ENCODE measurements at regions of chr5 and their contacts with region 1.

Region 1: DNA sequence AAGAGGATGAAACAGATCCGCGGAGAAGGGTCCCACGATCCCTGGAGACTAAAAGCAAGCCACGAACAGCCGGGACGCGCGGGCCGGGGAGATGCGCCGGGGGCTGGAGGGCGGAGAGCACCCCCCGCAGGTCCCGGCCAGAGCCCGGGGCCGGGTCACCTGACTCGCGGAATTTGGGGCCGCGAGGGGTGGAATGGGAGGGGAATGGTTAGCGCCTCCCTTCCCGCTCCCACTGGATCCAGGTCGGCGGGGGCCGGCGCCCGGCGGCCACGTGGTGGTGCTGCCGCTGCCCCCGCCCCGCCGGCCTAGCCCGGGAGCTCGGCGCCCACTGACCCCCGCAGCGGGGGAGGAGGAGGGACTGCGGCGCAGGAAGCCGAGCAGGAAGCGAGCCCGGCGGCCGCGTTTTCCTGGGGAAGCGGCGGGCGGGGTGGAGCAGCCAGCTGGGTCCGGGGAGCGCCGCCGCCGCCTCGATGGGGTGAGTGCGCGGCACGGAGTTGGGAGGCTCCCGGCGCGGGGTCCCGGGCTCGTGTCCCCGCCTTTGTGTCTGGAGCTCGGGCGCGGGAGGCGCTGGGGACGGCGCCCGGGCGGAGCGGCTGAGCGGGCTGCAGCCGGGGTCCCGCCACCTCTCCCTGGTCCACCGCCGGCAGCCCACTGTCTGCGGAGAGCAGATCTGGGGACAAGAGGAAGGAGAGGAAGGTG is at the start of gene RAI14:
- DNase-seq: peak; percentile 82 to 87 (median 83)
- ATAC-seq: peak; percentile 56 to 92 (median 88)
- H3K4me3 ChIP-seq: peak within 1 kb of the TSS; percentile 69 to 95 (median 83)
- H3K27ac ChIP-seq: peak within 1 kb of the TSS; percentile 54 to 95 (median 86)
- H3K4me1 ChIP-seq: peaks cover 0 to 29% (median 11%) of the 10 kb centered on the region in 12 donors
- H3K27me3 ChIP-seq: peaks cover 0 to 28% (median 0%) of the 10 kb centered on the region in 9 donors
- CTCF ChIP-seq: peak in 6 of 12 donors; percentile 9 to 40 (median 20)
- POLR2A ChIP-seq: peak in 1 of 2 donors; percentile 56
- total RNA-seq, gene RAI14: 3.5 to 34.3 (median 10.7) TPM

Region 2: DNA sequence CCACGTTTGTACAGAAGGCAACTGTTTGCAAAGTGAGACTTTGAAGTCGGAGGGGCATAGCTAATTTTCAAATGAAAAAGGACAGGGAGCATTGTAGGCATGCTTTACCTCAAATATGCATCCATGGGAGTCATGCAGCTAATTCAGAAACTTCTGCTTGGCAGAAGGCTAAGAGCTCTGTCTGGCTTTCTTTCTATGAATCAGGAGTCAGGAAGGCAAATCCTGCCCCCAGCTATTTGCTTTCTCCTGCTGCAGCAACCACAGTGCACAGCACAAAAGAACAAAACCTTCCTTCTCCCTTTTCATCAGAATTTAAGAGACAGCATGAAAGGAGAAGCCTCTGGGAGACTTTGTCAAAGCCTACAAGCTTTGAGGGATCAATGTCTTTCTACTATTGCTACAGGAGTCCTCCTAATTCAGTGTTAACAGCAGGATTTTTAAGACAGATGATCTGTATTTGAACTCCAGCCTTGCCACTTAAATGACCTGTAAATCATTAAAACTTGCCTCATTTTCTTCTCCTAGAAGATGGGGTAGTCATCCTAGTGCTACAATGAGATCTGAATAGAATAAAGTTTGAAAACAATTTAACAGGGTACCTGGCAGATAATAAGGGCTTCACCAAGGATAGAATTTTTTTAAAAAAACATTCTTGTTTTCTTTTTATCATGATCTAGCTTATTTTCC is 1006.2 kb before region 1 on chr5:
- intact Hi-C with region 1: no loop called
- DNase-seq: no peak
- ATAC-seq: no peak
- H3K4me3 ChIP-seq: no peak overlapping the region
- H3K27ac ChIP-seq: no peak overlapping the region
- H3K4me1 ChIP-seq: no peaks in the 10 kb centered on the region
- H3K27me3 ChIP-seq: no peaks in the 10 kb centered on the region
- CTCF ChIP-seq: no peak
- POLR2A ChIP-seq: no peak

Region 3: DNA sequence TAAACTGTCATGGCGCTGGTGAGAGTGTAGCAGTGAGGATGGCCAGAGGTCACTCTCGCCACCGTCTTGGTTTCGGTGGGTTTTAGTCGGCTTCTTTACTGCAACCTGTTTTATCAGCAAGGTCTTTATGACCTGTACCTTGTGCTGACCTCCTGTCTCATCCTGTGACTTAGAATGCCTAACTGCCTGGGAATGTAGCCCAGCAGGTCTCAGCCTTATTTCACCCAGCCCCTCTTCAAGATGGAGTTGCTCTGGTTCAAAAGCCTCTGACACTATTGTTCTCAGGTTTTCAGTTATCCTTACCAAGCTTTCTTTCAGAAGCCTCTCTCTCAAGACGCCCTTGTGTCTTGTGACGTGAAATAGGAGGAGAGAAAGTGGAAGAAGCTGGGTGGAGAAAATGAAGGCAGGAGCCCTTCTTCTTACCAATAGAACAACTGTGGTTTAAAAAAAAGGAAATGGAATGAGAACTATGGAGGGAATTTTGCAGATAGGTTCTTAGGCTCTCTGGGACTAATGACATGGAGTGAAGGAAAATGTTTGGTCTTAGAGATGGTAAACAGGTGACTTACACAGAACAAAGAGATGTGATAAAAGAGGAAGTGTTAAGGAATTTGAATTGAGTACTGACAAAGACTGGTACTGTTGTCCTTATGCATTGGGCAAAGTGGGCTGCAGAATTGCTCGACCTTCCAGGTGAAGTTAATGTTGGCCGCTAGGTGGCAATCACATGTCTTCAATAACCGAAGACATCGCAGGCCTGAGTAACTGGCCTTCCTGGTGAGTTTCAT is 133.4 kb before region 1 on chr5:
- intact Hi-C with region 1: loop called in 5 of 10 experiments (anchors 5 to 10 kb)
- DNase-seq: peak in 4 of 5 donors; percentile 61 to 69 (median 66)
- ATAC-seq: peak; percentile 64 to 83 (median 71)
- H3K4me3 ChIP-seq: no peak overlapping the region
- H3K27ac ChIP-seq: no peak overlapping the region
- H3K4me1 ChIP-seq: peaks cover 0 to 14% (median 2%) of the 10 kb centered on the region in 12 donors
- H3K27me3 ChIP-seq: no peaks in the 10 kb centered on the region
- CTCF ChIP-seq: peak; percentile 67 to 88 (median 74)
- POLR2A ChIP-seq: no peak

Region 4: GRCh38 chr5:34551911-34552433 is 104.2 kb before region 1 on chr5:
- intact Hi-C with region 1: loop called in 1 of 10 experiments (anchors 5 kb)
- DNase-seq: peak in 2 of 5 donors; percentile 23 to 46
- ATAC-seq: peak; percentile 73 to 85 (median 81)
- H3K4me3 ChIP-seq: no peak overlapping the region
- H3K27ac ChIP-seq: peak overlapping the region in 5 of 12 donors; percentile 2 to 66 (median 14)
- H3K4me1 ChIP-seq: peaks cover 0 to 40% (median 9%) of the 10 kb centered on the region in 12 donors
- H3K27me3 ChIP-seq: no peaks in the 10 kb centered on the region
- CTCF ChIP-seq: no peak
- POLR2A ChIP-seq: no peak

Region 5: GRCh38 chr5:34717426-34718327 is 61.5 kb after region 1 on chr5:
- intact Hi-C with region 1: loop called in 1 of 10 experiments (anchors 5 kb)
- DNase-seq: no peak
- ATAC-seq: peak in 3 of 4 donors; percentile 45 to 65 (median 54)
- H3K4me3 ChIP-seq: no peak overlapping the region
- H3K27ac ChIP-seq: peak overlapping the region in 5 of 12 donors; percentile 10 to 47 (median 36)
- H3K4me1 ChIP-seq: peaks cover 0 to 20% (median 7%) of the 10 kb centered on the region in 12 donors
- H3K27me3 ChIP-seq: no peaks in the 10 kb centered on the region
- CTCF ChIP-seq: no peak
- POLR2A ChIP-seq: no peak

Region 6: GRCh38 chr5:34838785-34839714 is 182.9 kb after region 1 on chr5 and contains the start of gene TTC23L:
- intact Hi-C with region 1: loop called in 1 of 10 experiments (anchors 10 kb)
- DNase-seq: peak; percentile 87 to 92 (median 90)
- ATAC-seq: peak; percentile 89 to 97 (median 94)
- H3K4me3 ChIP-seq: peak within 1 kb of the TSS; percentile 53 to 89 (median 70)
- H3K27ac ChIP-seq: peak within 1 kb of the TSS in 7 of 12 donors; percentile 5 to 65 (median 41)
- H3K4me1 ChIP-seq: peaks cover 0 to 15% (median 5%) of the 10 kb centered on the region in 12 donors
- H3K27me3 ChIP-seq: no peaks in the 10 kb centered on the region
- CTCF ChIP-seq: no peak
- POLR2A ChIP-seq: peak in 1 of 2 donors; percentile 32
- total RNA-seq, gene TTC23L: 0.69 TPM in 1 of 9 donors, not detected in the others

Region 7: GRCh38 chr5:34898258-34898895 is 242.2 kb after region 1 on chr5:
- intact Hi-C with region 1: loop called in 4 of 10 experiments (anchors 5 to 10 kb)
- DNase-seq: peak in 4 of 5 donors; percentile 50 to 58 (median 52)
- ATAC-seq: peak in 3 of 4 donors; percentile 78 to 87 (median 79)
- H3K4me3 ChIP-seq: no peak overlapping the region
- H3K27ac ChIP-seq: no peak overlapping the region
- H3K4me1 ChIP-seq: no peaks in the 10 kb centered on the region
- H3K27me3 ChIP-seq: no peaks in the 10 kb centered on the region
- CTCF ChIP-seq: peak; percentile 70 to 94 (median 85)
- POLR2A ChIP-seq: no peak

Region 8: DNA sequence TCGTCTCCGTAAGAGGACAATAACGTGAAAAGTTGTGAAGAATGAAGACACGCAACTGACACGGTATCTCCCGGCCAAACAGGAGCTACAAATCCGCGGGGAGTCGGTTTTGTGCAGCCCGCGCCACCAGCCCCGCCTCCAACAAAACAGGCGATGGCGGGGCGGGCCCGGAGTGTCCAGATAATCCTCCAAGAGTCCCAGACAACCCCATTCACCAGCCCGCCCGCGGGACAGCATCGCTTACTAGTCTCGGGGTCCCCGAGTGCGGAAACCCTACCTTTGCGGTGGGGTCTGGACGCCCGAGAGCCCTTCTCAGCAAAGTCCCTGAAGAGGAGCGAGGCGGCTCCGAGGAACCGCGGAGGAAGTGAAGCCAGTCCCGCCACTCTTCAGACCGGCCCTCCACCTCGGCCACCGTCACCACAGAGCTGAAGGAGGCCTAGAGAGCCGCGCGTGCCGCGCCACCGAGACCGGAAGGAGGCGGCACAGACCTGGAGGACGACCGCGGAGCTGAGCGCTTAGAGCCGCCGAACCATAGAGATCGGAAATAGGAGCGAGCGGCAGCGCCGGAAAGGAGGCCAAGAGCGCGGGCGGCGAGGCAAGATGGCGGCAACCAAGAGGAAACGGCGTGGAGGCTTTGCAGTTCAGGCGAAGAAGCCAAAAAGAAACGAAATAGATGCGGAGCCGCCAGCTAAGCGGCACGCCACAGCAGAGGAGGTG is 259.1 kb after region 1 on chr5 and contains the starts of genes BRIX1 and RAD1:
- intact Hi-C with region 1: loop called in 1 of 10 experiments (anchors 5 kb)
- DNase-seq: peak; percentile 96 to 98 (median 98)
- ATAC-seq: peak; percentile 100
- H3K4me3 ChIP-seq: peak within 1 kb of the TSS; percentile 57 to 97 (median 84)
- H3K27ac ChIP-seq: peak within 1 kb of the TSS; percentile 61 to 92 (median 88)
- H3K4me1 ChIP-seq: peaks cover 7 to 36% (median 24%) of the 10 kb centered on the region in 12 donors
- H3K27me3 ChIP-seq: no peaks in the 10 kb centered on the region
- CTCF ChIP-seq: peak in 6 of 12 donors; percentile 16 to 48 (median 32)
- POLR2A ChIP-seq: peak in 1 of 2 donors; percentile 37
- total RNA-seq, gene BRIX1: 10.5 to 19.6 (median 14.5) TPM
- total RNA-seq, gene RAD1: 12.8 to 29.6 (median 22.7) TPM